Mucosa of descending colon (tissue), 3 donors: ENCODE measurements at regions of chr12 and their contacts with region 1.

Region 1: DNA sequence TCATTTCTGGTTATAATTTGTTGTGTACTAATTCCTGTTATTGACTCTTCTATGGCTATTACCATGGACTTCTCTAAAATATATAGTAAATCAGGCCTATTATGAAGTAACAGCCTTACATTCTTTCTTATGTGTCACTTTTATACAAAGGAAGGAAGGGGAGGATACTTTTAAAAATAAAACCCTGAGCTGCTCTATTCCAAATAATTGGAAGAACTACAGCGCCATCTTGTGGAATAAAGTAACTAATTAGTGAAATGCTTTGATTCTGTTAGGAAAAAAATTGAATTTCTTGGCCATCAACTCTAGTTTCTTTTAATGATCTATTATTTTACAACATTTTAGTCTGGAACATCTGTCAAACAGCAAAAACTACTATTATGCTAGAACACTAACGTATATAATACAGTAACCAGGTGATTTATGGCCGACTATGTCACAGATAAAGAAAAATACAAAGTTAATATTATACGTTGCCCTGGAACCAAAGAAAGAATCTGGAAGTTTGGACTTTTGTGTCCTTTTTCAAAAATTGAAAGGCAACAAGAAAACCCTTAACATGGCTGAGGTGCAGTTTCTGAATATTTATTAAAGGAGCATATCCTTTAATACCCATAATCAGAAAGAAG is 55.0 kb upstream of the NELL2 start:
- DNase-seq: no peak
- ATAC-seq: peak; percentile 32
- H3K4me3 ChIP-seq: no peak overlapping the region
- H3K4me1 ChIP-seq: no peaks in the 10 kb centered on the region
- CTCF ChIP-seq: no peak

Region 2: DNA sequence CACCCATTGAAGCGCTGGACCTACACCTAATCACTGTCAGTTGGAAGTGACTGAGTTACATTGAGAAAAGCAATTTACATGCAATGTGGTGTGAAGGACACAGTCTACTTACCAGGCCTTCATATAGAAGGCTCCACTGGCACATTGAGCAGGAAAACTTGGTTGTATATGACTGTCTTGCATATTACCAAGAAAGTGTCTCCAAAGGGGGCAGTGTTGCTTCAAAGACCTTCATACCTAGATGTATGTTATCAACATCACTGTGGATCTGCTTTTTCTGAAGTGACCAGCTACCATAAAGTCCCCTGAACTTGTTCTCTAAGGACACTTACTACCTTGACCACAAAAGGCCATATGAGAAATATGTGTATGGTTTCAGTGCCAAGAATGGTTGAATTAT is 119.0 kb before region 1 on chr12:
- intact Hi-C with region 1: loop called in 1 of 2 experiments (anchors 2 kb)
- DNase-seq: peak in 1 of 3 donors; percentile 83
- ATAC-seq: peak; percentile 60
- H3K4me3 ChIP-seq: no peak overlapping the region
- H3K4me1 ChIP-seq: no peaks in the 10 kb centered on the region
- CTCF ChIP-seq: no peak

Region 3: DNA sequence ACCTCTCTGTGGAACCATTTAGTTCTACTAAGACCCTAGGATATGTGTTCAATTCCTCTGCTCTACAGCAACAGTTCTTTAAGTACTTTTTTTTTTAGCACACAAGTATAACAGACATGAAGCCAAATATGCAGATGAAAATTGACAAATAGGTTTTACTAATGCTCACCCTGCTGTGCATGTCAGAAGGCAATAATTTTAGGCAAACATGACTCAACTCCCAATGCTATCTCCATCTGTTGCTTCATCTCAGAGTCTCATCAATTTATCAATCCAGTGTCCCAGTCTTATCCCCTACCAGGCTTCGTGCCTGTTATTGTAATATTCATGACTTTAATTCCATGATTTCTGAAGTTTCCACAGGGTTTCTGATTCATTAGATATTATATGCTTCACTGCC is 62.1 kb after region 1 on chr12:
- intact Hi-C with region 1: no loop called
- DNase-seq: no peak
- ATAC-seq: no peak
- H3K4me3 ChIP-seq: no peak overlapping the region
- H3K4me1 ChIP-seq: no peaks in the 10 kb centered on the region
- CTCF ChIP-seq: no peak